Ascending aorta (tissue), 2 donors: ENCODE measurements at regions of chr14 and their contacts with region 1.

Region 1: DNA sequence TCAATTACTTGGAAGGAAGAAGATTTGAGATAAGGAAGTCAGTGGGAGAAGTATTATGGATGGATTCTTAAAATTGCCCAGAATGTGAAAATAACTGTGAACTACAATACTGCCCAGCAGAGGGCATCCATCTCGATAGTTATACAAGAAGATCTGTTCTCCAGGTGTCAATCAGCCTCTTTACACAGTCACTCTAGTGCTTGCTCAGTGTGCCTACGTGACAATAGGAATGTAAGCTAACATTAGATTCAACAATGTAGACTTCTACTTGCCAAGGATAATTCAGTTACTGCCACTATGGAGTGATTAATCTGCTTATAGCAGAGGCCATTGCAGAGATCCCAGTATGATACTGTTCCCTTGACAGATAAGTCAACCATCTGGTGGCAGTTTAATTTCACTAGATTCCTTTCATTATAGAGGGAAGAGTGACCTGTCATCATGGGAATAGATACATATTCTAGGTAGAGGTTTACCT is 10.6 kb upstream of the MAP4K5 start:
- DNase-seq: no peak
- H3K4me3 ChIP-seq: no peak overlapping the region
- H3K27ac ChIP-seq: no peak overlapping the region
- H3K4me1 ChIP-seq: no peaks in the 10 kb centered on the region
- H3K27me3 ChIP-seq: no peaks in the 10 kb centered on the region
- CTCF ChIP-seq: peak; percentile 41 to 61 (median 51)

Region 2: GRCh38 chr14:50363714-50364111 is 179.3 kb before region 1 on chr14:
- intact Hi-C with region 1: no loop called
- DNase-seq: no peak
- H3K4me3 ChIP-seq: peak overlapping the region; percentile 30 to 45
- H3K27ac ChIP-seq: peak overlapping the region; percentile 43 to 55
- H3K4me1 ChIP-seq: no peaks in the 10 kb centered on the region
- H3K27me3 ChIP-seq: no peaks in the 10 kb centered on the region
- CTCF ChIP-seq: no peak

Region 3: GRCh38 chr14:50559990-50560930 is 17.3 kb after region 1 on chr14 and contains the start of gene ATL1:
- intact Hi-C with region 1: loop called (anchors 2 kb)
- DNase-seq: peak; percentile 15 to 86
- H3K4me3 ChIP-seq: peak within 1 kb of the TSS; percentile 60 to 78
- H3K27ac ChIP-seq: peak within 1 kb of the TSS; percentile 91 to 93
- H3K4me1 ChIP-seq: peaks cover 0 to 8% of the 10 kb centered on the region in 2 donors
- H3K27me3 ChIP-seq: no peaks in the 10 kb centered on the region
- CTCF ChIP-seq: no peak
- total RNA-seq, gene ATL1: 1.2 TPM

Region 4: DNA sequence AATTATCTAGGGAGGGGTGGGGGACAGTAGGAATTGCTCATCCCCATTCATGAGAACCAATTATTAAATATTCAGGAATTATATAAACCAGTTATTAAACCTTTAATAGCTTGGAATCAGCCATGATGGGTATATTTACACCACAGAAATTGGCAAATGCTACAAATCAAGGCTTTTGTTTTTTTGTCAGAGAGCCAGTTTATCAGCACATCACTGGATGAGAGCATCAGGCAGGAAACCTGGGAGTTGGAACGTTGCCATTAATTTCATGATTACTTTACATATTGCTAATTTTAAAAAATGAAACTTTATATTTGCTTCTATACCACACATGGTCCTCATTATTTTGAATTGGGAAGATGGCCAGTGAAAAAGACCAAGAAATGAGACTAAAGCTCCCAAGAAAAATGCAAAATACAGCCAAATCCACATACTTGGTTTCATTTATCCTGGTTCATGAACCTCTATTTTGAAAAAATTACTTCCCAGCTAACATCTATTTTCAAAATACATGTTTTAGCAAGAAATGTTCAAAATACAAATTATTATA is 65.4 kb after region 1 on chr14:
- intact Hi-C with region 1: no loop called
- DNase-seq: no peak
- H3K4me3 ChIP-seq: no peak overlapping the region
- H3K27ac ChIP-seq: no peak overlapping the region
- H3K4me1 ChIP-seq: no peaks in the 10 kb centered on the region
- H3K27me3 ChIP-seq: no peaks in the 10 kb centered on the region
- CTCF ChIP-seq: no peak

Region 5: DNA sequence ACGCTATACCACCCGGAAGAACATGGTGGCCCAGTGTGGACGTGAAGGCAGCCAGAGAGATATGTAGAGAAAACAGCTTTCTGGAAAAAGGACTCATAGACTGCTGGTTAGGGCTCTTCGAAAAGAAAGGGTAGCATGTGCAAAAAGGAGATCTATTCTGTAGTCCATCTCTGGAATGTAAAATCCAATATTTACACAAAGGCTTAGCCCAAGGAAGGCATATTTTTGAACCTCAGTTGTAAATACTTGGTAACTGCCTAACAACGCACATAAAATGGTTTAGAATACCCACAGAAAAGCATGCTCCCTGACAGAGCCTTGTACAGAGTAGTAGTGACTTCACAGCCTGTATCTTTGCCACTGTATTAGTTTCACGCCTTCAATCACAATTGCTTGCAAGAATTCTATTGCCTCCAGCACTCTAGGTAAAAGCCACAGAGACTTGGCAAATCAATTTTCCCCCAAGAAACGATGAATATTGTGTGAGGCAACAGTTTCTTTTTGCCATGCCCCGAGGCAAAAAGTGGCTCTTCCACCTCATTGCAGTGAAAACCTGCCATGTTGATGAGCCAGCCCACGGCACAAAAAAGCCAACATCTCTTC is 492.7 kb after region 1 on chr14:
- intact Hi-C with region 1: no loop called
- DNase-seq: no peak
- H3K4me3 ChIP-seq: no peak overlapping the region
- H3K27ac ChIP-seq: no peak overlapping the region
- H3K4me1 ChIP-seq: no peaks in the 10 kb centered on the region
- H3K27me3 ChIP-seq: no peaks in the 10 kb centered on the region
- CTCF ChIP-seq: no peak